Activated T-helper 2 cell treated with anti-CD3 and anti-CD28 coated beads, Interferon-gamma antibody, Interleukin-2, Interleukin-4, amounts not matched to agents 10 μg/mL and 5 μg/mL and 100 μg/mL, durations not matched to agents 14 hours and 24 hours and 36 hours (primary cell): ENCODE measurements at regions of chr5 and their contacts with region 1.

Region 1: GRCh38 chr5:107501965-107502675 is 168.6 kb downstream of the EFNA5 start:
- DNase-seq: no peak
- H3K4me3 Mint-ChIP-seq: peak overlapping the region; percentile 34
- H3K27ac Mint-ChIP-seq: peak overlapping the region; percentile 44
- H3K4me1 Mint-ChIP-seq: peaks cover 13% of the 10 kb centered on the region
- H3K27me3 Mint-ChIP-seq: peaks cover 19% of the 10 kb centered on the region

Region 2: GRCh38 chr5:106595864-106596263 is 906.3 kb before region 1 on chr5:
- intact Hi-C with region 1: no loop called
- DNase-seq: no peak
- H3K4me3 Mint-ChIP-seq: no peak overlapping the region
- H3K27ac Mint-ChIP-seq: no peak overlapping the region
- H3K4me1 Mint-ChIP-seq: no peaks in the 10 kb centered on the region
- H3K27me3 Mint-ChIP-seq: no peaks in the 10 kb centered on the region

Region 3: DNA sequence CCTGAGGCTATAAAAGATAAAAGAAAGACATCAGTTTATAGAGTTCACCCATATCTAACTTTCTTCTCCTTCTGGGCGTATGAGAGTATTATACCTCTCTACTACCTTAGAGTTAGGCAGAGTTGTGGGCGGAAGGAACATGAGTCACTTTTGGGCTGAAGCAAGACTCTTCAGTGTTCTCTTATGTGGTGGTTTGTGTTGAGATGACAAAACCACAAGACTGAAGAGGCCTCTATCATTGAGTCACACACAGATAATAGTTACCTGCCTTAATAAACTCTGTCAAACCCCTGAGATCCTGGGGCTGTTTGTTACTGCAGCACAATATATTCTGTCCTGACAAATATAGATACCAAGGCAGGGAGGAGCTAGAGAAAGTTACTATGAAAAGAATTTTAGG is 15.6 kb before region 1 on chr5:
- intact Hi-C with region 1: loop called (anchors 1 kb)
- DNase-seq: peak; percentile 29
- H3K4me3 Mint-ChIP-seq: no peak overlapping the region
- H3K27ac Mint-ChIP-seq: no peak overlapping the region
- H3K4me1 Mint-ChIP-seq: peaks cover 23% of the 10 kb centered on the region
- H3K27me3 Mint-ChIP-seq: peaks cover 19% of the 10 kb centered on the region

Region 4: GRCh38 chr5:107571621-107572536 is 69.8 kb after region 1 on chr5:
- intact Hi-C with region 1: loop called (anchors 5 kb)
- DNase-seq: peak; percentile 76
- H3K4me3 Mint-ChIP-seq: peak overlapping the region; percentile 56
- H3K27ac Mint-ChIP-seq: no peak overlapping the region
- H3K4me1 Mint-ChIP-seq: peaks cover 18% of the 10 kb centered on the region
- H3K27me3 Mint-ChIP-seq: peaks cover 36% of the 10 kb centered on the region